GM12878 (cell line): ENCODE measurements at regions of chr2 and their contacts with region 1.

Region 1: DNA sequence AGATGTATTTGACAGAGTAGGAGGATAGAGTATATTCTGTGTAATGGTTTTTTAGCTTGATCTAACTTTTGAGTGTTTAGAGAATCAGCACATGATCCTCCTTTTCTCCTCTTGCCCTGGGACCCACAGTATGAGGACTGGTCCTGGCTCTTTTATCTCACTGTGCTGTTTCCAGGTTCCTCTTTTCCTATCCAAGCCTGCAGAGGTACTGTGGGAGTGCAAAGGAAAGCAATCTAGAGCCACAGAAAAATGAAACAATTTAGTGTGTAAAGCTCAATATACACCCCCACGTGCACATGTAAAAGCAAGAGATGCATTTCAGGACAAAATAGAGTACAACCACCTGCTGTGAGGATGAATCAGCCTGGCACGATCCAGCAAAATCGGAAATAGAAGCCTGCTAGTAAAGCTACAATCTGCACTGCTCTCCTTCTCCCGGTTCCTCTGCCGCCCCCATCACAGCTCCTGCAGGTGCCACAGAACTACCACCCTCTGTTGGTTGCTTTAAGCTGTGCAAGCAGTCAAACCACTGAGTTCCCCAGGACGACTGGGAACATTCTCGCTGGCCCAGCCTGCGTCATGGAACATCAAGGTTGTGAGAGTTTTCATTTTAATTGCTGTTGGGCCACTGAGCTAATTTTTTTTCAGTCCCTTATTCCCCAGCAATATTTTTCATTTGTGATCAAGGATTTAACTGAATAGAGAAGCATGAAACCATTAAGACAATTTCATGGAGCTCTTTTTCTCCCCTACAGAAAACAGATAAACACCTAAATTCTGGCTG is 47.8 kb upstream of the MAPRE3 start:
- DNase-seq: no peak
- ATAC-seq: peak; percentile 89
- H3K4me3 ChIP-seq: no peak overlapping the region
- H3K27ac ChIP-seq: no peak overlapping the region
- H3K4me1 ChIP-seq: no peaks in the 10 kb centered on the region
- H3K27me3 ChIP-seq: no peaks in the 10 kb centered on the region
- CTCF ChIP-seq: peak; percentile 62 to 76 (median 69)
- EP300 ChIP-seq: no peak
- POLR2A ChIP-seq: no peak
- RAD21 ChIP-seq: peak; percentile 43

Region 2: GRCh38 chr2:26840937-26841613 is 81.5 kb before region 1 on chr2:
- CTCF ChIA-PET with region 1: interaction called, 62 read pairs
- POLR2A ChIA-PET with region 1: no interaction called
- RAD21 ChIA-PET with region 1: interaction called, 28 read pairs
- SMC1A ChIA-PET with region 1: interaction called, 21 read pairs
- in situ Hi-C with region 1: loop called (anchors 5 kb)
- intact Hi-C with region 1: loop called (anchors 1 kb)
- DNase-seq: no peak
- ATAC-seq: peak; percentile 78
- H3K4me3 ChIP-seq: no peak overlapping the region
- H3K27ac ChIP-seq: no peak overlapping the region
- H3K4me1 ChIP-seq: no peaks in the 10 kb centered on the region
- H3K27me3 ChIP-seq: peaks cover 4 to 5% of the 10 kb centered on the region in 2 experiments; a peak in 3 of 4 replicates
- CTCF ChIP-seq: peak in 2 of 3 experiments; percentile 1 to 5; a peak in 1 of 6 replicates
- EP300 ChIP-seq: no peak
- POLR2A ChIP-seq: no peak
- RAD21 ChIP-seq: no peak

Region 3: GRCh38 chr2:26907416-26907815 is 15.2 kb before region 1 on chr2:
- CTCF ChIA-PET with region 1: interaction called, 19 read pairs
- POLR2A ChIA-PET with region 1: no interaction called
- RAD21 ChIA-PET with region 1: no interaction called
- SMC1A ChIA-PET with region 1: interaction called, 4 read pairs
- in situ Hi-C with region 1: no loop called
- intact Hi-C with region 1: no loop called
- DNase-seq: no peak
- ATAC-seq: no peak
- H3K4me3 ChIP-seq: no peak overlapping the region
- H3K27ac ChIP-seq: no peak overlapping the region
- H3K4me1 ChIP-seq: peaks cover 5% of the 10 kb centered on the region
- H3K27me3 ChIP-seq: no peaks in the 10 kb centered on the region
- CTCF ChIP-seq: no peak
- EP300 ChIP-seq: no peak
- POLR2A ChIP-seq: no peak
- RAD21 ChIP-seq: no peak

Region 4: GRCh38 chr2:27071277-27071989 is 148.8 kb after region 1 on chr2 and contains the start of gene OST4:
- CTCF ChIA-PET with region 1: no interaction called
- POLR2A ChIA-PET with region 1: no interaction called
- RAD21 ChIA-PET with region 1: no interaction called
- SMC1A ChIA-PET with region 1: no interaction called
- in situ Hi-C with region 1: no loop called
- intact Hi-C with region 1: no loop called
- DNase-seq: no peak
- ATAC-seq: peak; percentile 91
- H3K4me3 ChIP-seq: peak within 1 kb of the TSS; percentile 85
- H3K27ac ChIP-seq: peak within 1 kb of the TSS; percentile 94
- H3K4me1 ChIP-seq: peaks cover 37% of the 10 kb centered on the region
- H3K27me3 ChIP-seq: no peaks in the 10 kb centered on the region
- CTCF ChIP-seq: no peak
- EP300 ChIP-seq: no peak
- POLR2A ChIP-seq: peak; percentile 98
- RAD21 ChIP-seq: no peak
- polyA plus RNA-seq, gene OST4: 1,505 to 1,543 TPM